CD4-positive, alpha-beta memory T cell (primary cell): ENCODE measurements at regions of chr15 and their contacts with region 1.

Region 1: DNA sequence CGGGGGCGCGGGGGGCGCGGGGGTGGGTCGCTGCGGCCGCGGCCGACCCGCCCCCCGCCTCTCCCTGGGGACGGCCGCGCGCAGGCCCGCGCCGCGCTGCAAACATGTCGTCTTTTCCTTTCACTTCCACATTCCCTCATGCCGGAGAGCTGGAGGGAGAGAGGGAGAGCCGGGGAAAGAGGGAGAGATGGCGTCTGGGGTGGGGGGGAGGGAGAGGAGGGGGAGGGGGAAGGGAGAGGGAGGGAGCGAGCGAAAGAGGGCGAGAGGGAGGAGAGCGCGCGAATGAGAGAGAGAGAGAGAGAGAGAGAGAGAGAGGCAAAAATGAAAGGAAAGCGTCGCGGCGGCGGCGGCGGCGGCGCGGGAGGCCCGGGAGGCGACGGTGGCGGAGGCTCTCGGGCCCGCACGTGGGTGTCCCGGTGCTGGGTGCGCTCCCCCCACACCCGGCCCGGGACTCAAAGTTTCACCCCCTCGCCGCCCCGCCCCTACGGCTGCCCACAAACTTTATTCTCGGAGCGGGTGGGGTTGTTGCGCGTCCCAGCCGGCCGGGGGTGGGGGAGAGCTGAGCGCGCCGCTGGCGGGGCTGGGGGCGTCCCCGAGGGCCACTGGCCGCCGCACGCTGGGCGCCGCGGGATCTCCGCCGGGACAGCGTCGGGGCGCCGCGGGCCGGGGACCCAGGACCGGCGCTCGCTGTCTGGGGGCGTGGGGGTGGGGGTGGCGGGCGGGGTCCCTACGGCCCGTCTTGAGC is 731 bp downstream of the ZNF710 start:
- DNase-seq: peak; percentile 71 to 76 (median 76)
- H3K4me3 ChIP-seq: peak overlapping the region in 1 of 2 donors; percentile 47
- H3K4me3 Mint-ChIP-seq: peak overlapping the region; percentile 82 to 96 (median 89)
- H3K27ac ChIP-seq: peak overlapping the region; percentile 61
- H3K27ac Mint-ChIP-seq: peak overlapping the region; percentile 86 to 98 (median 94)
- H3K4me1 ChIP-seq: peaks cover 66% of the 10 kb centered on the region
- H3K4me1 Mint-ChIP-seq: peaks cover 30 to 70% (median 53%) of the 10 kb centered on the region in 4 donors
- H3K27me3 ChIP-seq: no peaks in the 10 kb centered on the region
- H3K27me3 Mint-ChIP-seq: no peaks in the 10 kb centered on the region

Region 2: GRCh38 chr15:89776274-89777072 is 225.4 kb before region 1 on chr15 and contains the start of gene MESP2:
- CTCF ChIA-PET with region 1: no interaction called
- POLR2A ChIA-PET with region 1: no interaction called
- intact Hi-C with region 1: no loop called
- DNase-seq: peak in 4 of 5 donors; percentile 36 to 51 (median 41)
- H3K4me3 ChIP-seq: peak within 1 kb of the TSS in 1 of 2 donors; percentile 41
- H3K4me3 Mint-ChIP-seq: peak within 1 kb of the TSS; percentile 20 to 67 (median 56)
- H3K27ac ChIP-seq: no peak within 1 kb of the TSS
- H3K27ac Mint-ChIP-seq: no peak within 1 kb of the TSS
- H3K4me1 ChIP-seq: peaks cover 3% of the 10 kb centered on the region
- H3K4me1 Mint-ChIP-seq: peaks cover 0 to 5% (median 0%) of the 10 kb centered on the region in 4 donors
- H3K27me3 ChIP-seq: peaks cover 7% of the 10 kb centered on the region
- H3K27me3 Mint-ChIP-seq: peaks cover 12 to 14% of the 10 kb centered on the region in 2 donors
- total RNA-seq, gene MESP2: not detected

Region 3: DNA sequence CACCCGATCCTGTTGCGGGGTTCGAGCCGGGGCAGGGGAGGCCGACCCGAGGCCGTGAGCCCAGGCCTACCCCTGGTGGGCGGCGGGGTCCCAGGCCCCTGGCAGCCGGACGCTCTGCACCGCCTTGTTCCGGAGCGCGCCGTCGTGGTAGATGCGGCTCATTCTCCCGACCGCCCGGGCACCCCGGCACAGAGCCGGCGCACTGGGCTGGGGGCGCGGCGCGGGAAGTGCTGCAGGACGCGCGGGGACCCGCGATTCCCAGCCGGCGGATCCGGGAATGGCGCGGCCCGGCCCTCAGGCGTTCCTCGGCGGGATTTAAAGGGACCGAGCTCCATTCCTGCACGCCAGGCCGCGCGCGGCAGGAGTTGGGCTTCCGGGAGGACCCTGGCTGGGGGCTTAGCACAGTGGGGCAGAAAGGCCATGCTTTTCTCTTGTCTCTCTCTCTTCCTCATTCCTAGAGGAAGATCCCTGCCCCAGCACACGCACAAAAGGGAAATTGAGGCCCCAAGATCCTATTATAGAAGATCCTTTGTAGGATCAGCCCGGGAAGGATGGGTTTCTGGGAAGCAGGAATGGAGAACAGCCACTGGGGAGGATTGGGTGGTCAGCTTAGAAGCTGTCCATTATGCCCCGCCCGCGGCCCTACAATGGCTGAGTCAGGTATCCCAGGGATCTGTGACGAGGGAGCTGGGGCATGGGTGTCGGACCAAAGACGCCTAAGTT is 89.0 kb before region 1 on chr15 and contains the start of gene ARPIN:
- CTCF ChIA-PET with region 1: no interaction called
- POLR2A ChIA-PET with region 1: no interaction called
- intact Hi-C with region 1: no loop called
- DNase-seq: no peak
- H3K4me3 ChIP-seq: no peak within 1 kb of the TSS
- H3K4me3 Mint-ChIP-seq: peak within 1 kb of the TSS in 5 of 8 donors; percentile 12 to 60 (median 46)
- H3K27ac ChIP-seq: no peak within 1 kb of the TSS
- H3K27ac Mint-ChIP-seq: no peak within 1 kb of the TSS
- H3K4me1 ChIP-seq: peaks cover 4% of the 10 kb centered on the region
- H3K4me1 Mint-ChIP-seq: peaks cover 0 to 5% (median 1%) of the 10 kb centered on the region in 4 donors
- H3K27me3 ChIP-seq: peaks cover 8% of the 10 kb centered on the region
- H3K27me3 Mint-ChIP-seq: peaks cover 30 to 39% of the 10 kb centered on the region in 2 donors
- total RNA-seq, gene ARPIN: 0.11 to 0.26 TPM

Region 4: GRCh38 chr15:90013503-90013937 is 11.7 kb after region 1 on chr15:
- CTCF ChIA-PET with region 1: interaction called, 4 read pairs
- POLR2A ChIA-PET with region 1: interaction called, 40 read pairs
- intact Hi-C with region 1: loop called (anchors 1 kb)
- DNase-seq: peak; percentile 59 to 83 (median 77)
- H3K4me3 ChIP-seq: peak overlapping the region; percentile 12 to 27
- H3K4me3 Mint-ChIP-seq: peak overlapping the region; percentile 52 to 86 (median 80)
- H3K27ac ChIP-seq: no peak overlapping the region
- H3K27ac Mint-ChIP-seq: peak overlapping the region; percentile 7 to 90 (median 88)
- H3K4me1 ChIP-seq: peaks cover 72% of the 10 kb centered on the region
- H3K4me1 Mint-ChIP-seq: peaks cover 40 to 67% (median 51%) of the 10 kb centered on the region in 4 donors
- H3K27me3 ChIP-seq: no peaks in the 10 kb centered on the region
- H3K27me3 Mint-ChIP-seq: no peaks in the 10 kb centered on the region

Region 5: DNA sequence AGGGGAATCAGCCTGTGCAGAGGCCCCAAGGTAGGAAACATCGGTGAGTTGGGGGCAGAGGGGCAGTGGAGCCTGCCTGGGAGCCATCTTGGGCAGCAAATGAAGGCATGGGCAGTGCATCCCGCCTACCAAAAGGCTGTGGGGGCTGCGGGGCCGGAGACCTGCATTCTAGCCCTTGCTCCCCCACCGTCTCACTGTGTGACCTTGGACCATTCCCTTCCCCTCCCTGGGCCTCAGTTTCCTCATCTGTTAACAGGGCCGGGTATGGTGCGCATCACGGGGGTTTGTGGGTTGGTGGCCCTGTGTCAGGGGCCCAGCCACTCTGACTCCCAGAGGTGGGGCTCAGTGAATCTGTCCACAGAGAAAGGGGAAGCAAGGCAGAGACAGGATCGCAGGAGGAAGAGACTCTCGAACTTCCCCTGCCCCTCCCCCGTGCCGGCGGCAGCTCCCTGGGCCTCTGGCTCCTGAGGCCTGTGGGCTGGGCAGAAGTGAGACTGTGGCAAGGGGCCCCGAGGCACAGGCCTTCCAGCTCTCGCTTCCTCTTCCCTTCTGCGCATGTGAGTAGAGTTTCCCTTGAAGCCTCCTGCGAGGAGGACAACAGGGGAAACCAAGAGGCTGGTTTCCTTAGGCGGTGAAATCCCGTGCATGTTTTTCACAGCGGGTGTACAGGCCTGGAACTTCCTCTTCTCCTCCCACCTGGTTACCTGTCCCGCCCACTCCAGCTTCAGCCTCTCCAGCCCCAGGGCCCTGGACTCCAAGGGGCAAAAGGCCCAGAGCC is 57.5 kb after region 1 on chr15:
- CTCF ChIA-PET with region 1: interaction called, 3 read pairs
- POLR2A ChIA-PET with region 1: interaction called, 19 read pairs
- intact Hi-C with region 1: no loop called
- DNase-seq: peak; percentile 64 to 81 (median 72)
- H3K4me3 ChIP-seq: peak overlapping the region in 1 of 2 donors; percentile 51
- H3K4me3 Mint-ChIP-seq: peak overlapping the region in 7 of 8 donors; percentile 35 to 82 (median 71)
- H3K27ac ChIP-seq: peak overlapping the region; percentile 62
- H3K27ac Mint-ChIP-seq: peak overlapping the region; percentile 90 to 97 (median 94)
- H3K4me1 ChIP-seq: peaks cover 49% of the 10 kb centered on the region
- H3K4me1 Mint-ChIP-seq: peaks cover 37 to 70% (median 49%) of the 10 kb centered on the region in 4 donors
- H3K27me3 ChIP-seq: no peaks in the 10 kb centered on the region
- H3K27me3 Mint-ChIP-seq: no peaks in the 10 kb centered on the region

Region 6: GRCh38 chr15:90138071-90138833 is 136.4 kb after region 1 on chr15:
- CTCF ChIA-PET with region 1: no interaction called
- POLR2A ChIA-PET with region 1: no interaction called
- intact Hi-C with region 1: no loop called
- DNase-seq: no peak
- H3K4me3 ChIP-seq: no peak overlapping the region
- H3K4me3 Mint-ChIP-seq: no peak overlapping the region
- H3K27ac ChIP-seq: no peak overlapping the region
- H3K27ac Mint-ChIP-seq: peak overlapping the region in 1 of 7 donors; percentile 65
- H3K4me1 ChIP-seq: peaks cover 16% of the 10 kb centered on the region
- H3K4me1 Mint-ChIP-seq: peaks cover 11 to 37% (median 21%) of the 10 kb centered on the region in 4 donors
- H3K27me3 ChIP-seq: no peaks in the 10 kb centered on the region
- H3K27me3 Mint-ChIP-seq: no peaks in the 10 kb centered on the region